ENCODE measurements at regions of chr3 and their contacts with region 1.

Region 1: GRCh38 chr3:73100741-73101559 is 39.5 kb downstream of the EBLN2 start:
- ATAC-seq: peak; percentile 73 to 99 (median 92)
- H3K4me3 ChIP-seq: no peak overlapping the region
- H3K27ac ChIP-seq: no peak overlapping the region
- H3K4me1 ChIP-seq: peaks cover 2 to 4% of the 10 kb centered on the region in 2 donors

Region 2: GRCh38 chr3:72426618-72427397 is 674.1 kb before region 1 on chr3:
- in situ Hi-C with region 1: no loop called
- ATAC-seq: no peak
- H3K4me3 ChIP-seq: no peak overlapping the region
- H3K27ac ChIP-seq: no peak overlapping the region
- H3K4me1 ChIP-seq: peaks cover 3 to 8% of the 10 kb centered on the region in 2 donors

Region 3: GRCh38 chr3:73389117-73389813 is 288.3 kb after region 1 on chr3:
- in situ Hi-C with region 1: loop called in 1 of 9 experiments (anchors 10 kb)
- ATAC-seq: peak in 2 of 8 experiments; percentile 50 to 53
- H3K4me3 ChIP-seq: no peak overlapping the region
- H3K27ac ChIP-seq: no peak overlapping the region
- H3K4me1 ChIP-seq: peaks cover 2 to 7% of the 10 kb centered on the region in 2 donors

Region 4: DNA sequence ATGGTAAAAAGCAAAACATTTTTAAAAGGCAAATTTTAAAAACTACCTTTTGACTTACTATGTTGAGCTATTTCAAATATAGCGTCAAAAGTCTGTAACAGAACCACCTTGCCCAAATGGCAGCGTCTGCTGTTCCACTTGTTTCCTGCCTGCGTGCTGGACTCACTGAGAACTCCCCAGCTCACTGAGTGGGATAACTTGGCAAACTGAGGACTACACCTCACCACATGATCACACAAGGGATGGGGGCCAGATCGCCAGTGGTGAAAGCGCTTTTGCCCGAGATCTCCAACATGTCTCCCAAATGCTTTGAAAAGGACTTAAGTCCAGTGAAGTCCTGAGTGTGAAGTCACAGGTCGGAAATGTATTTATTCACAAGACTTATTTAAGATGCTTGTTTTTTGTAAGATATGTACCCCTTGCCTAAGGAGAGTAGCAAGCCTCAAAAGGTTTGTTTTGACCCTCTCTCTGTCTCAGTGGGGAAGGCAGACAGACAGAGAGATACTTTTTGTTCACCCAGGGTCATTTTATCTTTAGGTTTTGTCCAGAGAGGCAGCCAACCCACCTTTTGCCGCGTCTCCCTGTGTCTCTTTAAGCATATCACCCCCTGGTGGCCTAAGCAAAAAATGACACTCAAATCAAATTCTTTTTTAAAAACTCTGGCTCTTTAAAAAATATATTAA is 331.2 kb after region 1 on chr3:
- in situ Hi-C with region 1: loop called in 1 of 9 experiments (anchors 25 kb)
- ATAC-seq: peak in 1 of 8 experiments; percentile 5
- H3K4me3 ChIP-seq: peak overlapping the region in 2 of 5 donors; percentile 16 to 21
- H3K27ac ChIP-seq: no peak overlapping the region
- H3K4me1 ChIP-seq: peaks cover 31 to 35% of the 10 kb centered on the region in 2 donors

Region 5: GRCh38 chr3:73451306-73451944 is 350.5 kb after region 1 on chr3:
- in situ Hi-C with region 1: loop called in 2 of 9 experiments (anchors 25 kb)
- ATAC-seq: peak in 2 of 8 experiments; percentile 19 to 61
- H3K4me3 ChIP-seq: no peak overlapping the region
- H3K27ac ChIP-seq: no peak overlapping the region
- H3K4me1 ChIP-seq: peaks cover 17 to 26% of the 10 kb centered on the region in 2 donors

Region 6: DNA sequence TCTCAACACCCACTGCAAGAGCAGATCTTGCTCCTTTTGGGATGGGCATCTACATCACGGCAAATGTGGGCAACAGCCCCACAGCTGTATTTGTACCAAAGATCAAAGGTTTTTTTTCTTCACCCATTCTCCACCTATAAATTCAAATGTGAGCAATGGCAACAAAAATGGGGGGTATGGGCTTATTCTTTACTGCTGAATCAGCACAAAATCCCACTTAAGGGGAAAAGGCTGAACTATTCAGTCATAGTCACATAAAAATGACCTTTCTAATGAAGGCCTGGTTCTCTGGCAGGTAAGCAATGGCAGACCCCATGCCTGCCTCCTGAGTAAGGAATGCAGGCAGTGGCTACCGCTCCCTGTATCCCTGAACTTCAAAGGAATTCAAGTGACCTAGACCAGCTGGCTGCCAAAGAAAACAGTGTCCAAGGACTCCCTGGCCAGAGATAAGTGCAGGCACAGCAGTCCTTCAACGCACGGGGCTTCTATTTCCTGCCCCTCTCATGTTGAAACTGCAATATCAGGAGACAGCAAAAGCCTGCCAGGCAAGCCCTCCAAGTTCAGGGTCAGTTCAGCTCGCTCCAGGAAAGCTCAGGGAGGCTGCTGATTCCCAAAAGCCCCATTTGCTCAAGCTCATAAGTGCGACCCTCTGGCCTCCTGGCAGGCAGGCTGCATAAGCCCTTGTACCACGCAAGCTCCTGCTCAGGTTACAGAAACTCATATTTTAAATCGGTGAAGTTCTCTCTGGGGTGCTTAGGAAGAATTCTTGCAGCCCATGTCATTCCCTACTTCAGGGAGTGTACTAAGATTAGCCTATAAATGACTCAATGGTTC is 389.7 kb after region 1 on chr3:
- in situ Hi-C with region 1: loop called in 1 of 9 experiments (anchors 10 kb)
- ATAC-seq: peak in 6 of 8 experiments; percentile 18 to 73 (median 50)
- H3K4me3 ChIP-seq: no peak overlapping the region
- H3K27ac ChIP-seq: peak overlapping the region; percentile 4 to 12
- H3K4me1 ChIP-seq: peaks cover 23 to 39% of the 10 kb centered on the region in 2 donors

Region 7: GRCh38 chr3:73502609-73503583 is 401.9 kb after region 1 on chr3:
- in situ Hi-C with region 1: loop called in 6 of 9 experiments (anchors 5 to 10 kb)
- ATAC-seq: peak; percentile 61 to 87 (median 76)
- H3K4me3 ChIP-seq: no peak overlapping the region
- H3K27ac ChIP-seq: no peak overlapping the region
- H3K4me1 ChIP-seq: peaks cover 13 to 18% of the 10 kb centered on the region in 2 donors

Measured in motor neuron (in vitro differentiated cells).